ENCODE measurements at regions of chr6 and their contacts with region 1.

Region 1: DNA sequence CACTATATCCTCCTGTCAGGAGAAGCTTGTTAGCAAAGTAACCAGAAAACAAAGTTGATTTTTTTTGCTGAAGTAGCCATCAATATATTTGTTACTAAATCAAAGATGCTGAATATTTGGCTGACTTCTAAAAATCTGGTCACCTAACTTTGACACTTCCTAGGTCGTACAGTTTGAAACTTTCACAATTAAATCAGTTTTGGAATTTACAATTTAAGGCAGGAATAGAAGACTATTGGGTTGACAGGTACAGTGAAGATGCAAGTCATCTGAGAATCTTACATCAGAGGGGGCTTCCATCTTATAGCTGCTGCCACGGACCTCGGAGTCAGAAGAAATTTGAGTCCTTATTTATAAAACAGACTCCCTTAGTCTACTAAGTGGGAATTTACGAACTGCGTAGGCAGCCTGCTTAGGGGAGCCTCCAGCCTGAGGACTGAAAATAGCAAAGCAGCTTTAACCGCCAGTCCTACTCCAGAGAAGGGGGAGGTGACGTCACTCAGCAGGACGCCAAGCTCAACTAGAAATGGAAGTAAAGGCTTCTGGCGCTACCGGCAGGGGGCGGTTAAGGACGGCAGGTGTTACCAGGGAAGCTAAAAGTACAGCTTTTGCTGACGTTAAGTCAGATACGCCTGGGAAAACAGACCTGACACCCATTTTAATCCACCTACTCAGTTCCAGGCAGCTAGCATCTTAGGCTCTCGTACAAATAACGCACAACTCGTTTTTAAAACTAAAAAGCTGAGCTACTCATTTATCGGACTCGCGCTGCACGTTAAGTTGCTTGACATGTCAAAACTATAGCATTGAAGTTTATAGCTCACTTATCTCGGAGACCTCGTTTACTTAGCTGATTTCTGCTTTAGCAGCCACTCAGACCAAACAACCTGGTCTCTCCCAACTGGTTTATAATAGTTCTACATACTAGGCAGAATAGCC is 61.1 kb upstream of the HFE start:
- DNase-seq: peak; percentile 92
- H3K4me3 ChIP-seq: peak overlapping the region; percentile 41 to 60 (median 59)
- H3K27ac ChIP-seq: peak overlapping the region; percentile 89
- H3K4me1 ChIP-seq: peaks cover 30% of the 10 kb centered on the region
- H3K27me3 ChIP-seq: no peaks in the 10 kb centered on the region
- CTCF ChIP-seq: peak; percentile 91 to 95

Region 2: GRCh38 chr6:25968769-25969168 is 57.4 kb before region 1 on chr6:
- CTCF ChIA-PET with region 1: no interaction called
- dilution Hi-C with region 1: loop called (anchors 5 kb)
- in situ Hi-C with region 1: no loop called
- intact Hi-C with region 1: no loop called
- DNase-seq: no peak
- H3K4me3 ChIP-seq: no peak overlapping the region
- H3K27ac ChIP-seq: no peak overlapping the region
- H3K4me1 ChIP-seq: peaks cover 19% of the 10 kb centered on the region
- H3K27me3 ChIP-seq: no peaks in the 10 kb centered on the region
- CTCF ChIP-seq: no peak

Region 3: GRCh38 chr6:25981568-25982263 is 44.4 kb before region 1 on chr6:
- CTCF ChIA-PET with region 1: no interaction called
- dilution Hi-C with region 1: no loop called
- in situ Hi-C with region 1: no loop called
- intact Hi-C with region 1: no loop called
- DNase-seq: no peak
- H3K4me3 ChIP-seq: no peak overlapping the region
- H3K27ac ChIP-seq: no peak overlapping the region
- H3K4me1 ChIP-seq: no peaks in the 10 kb centered on the region
- H3K27me3 ChIP-seq: no peaks in the 10 kb centered on the region
- CTCF ChIP-seq: no peak

Region 4: DNA sequence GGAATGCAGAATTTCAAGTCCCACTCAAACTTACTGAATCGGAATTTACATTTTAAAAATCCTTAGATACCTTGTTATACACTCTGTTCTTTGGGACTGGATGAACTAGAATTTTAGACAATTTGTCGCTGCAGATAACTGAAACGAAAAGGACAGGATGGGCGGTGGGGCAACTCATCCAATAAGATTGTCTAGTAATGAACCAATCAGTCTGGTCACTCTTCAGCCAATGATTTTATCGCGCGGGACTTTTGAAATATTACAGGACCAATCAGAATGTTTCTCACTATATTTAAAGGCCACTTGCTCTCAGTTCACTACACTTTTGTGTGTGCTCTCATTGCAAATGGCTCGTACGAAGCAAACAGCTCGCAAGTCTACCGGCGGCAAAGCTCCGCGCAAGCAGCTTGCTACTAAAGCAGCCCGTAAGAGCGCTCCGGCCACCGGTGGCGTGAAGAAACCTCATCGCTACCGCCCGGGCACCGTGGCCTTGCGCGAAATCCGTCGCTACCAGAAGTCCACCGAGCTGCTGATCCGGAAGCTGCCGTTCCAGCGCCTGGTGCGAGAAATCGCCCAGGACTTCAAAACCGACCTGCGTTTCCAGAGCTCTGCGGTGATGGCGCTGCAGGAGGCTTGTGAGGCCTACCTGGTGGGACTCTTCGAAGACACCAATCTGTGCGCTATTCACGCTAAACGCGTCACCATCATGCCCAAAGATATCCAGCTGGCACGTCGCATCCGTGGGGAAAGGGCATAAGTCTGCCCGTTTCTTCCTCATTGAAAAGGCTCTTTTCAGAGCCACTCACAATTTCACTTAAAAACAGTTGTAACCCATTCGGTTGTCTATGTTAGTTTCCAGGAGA is 19.1 kb after region 1 on chr6:
- CTCF ChIA-PET with region 1: no interaction called
- dilution Hi-C with region 1: no loop called
- in situ Hi-C with region 1: no loop called
- intact Hi-C with region 1: loop called (anchors 1 kb)
- DNase-seq: peak; percentile 93
- H3K4me3 ChIP-seq: peak overlapping the region; percentile 37 to 64 (median 44)
- H3K27ac ChIP-seq: peak overlapping the region; percentile 79
- H3K4me1 ChIP-seq: peaks cover 27% of the 10 kb centered on the region
- H3K27me3 ChIP-seq: no peaks in the 10 kb centered on the region
- CTCF ChIP-seq: peak; percentile 22 to 36

Region 5: DNA sequence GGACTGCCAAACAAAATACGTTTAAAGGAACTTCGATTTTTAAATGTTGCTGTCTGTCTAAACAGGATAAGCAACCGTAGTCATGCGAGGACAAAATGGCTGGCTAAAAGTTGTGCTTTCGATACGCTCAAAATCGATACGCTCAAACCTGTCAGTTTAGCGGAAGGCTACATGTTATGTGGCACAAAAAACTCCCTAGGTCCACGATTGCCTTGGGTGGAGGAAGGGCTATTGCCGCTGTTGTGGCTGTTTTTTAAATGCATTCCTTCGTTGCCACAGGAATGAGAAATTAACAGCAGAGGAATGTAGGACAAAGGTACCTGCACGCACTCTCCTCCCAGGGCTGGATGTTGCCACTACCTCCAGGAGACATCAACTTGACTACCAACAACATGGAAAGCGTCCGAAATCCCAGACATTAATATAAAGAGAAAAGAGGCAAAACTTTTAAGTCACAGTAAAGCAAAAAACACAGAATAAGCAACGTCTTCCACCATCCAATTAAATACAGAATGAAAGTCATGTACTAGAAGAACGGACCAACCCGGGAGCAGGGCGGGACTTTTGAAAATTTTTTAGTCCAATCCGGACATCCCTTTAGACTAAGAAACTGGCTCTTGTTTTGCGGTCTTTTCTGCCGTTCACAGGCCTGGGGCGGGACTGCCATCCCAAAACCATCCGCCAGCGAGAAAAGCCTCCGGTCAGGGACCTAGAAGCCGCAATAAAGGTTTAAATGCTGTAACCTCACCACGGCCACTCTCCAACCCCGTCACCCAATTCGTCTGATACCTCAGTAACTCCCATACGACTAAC is 28.9 kb after region 1 on chr6:
- CTCF ChIA-PET with region 1: interaction called, 4 read pairs
- dilution Hi-C with region 1: no loop called
- in situ Hi-C with region 1: no loop called
- intact Hi-C with region 1: loop called (anchors 1 kb)
- DNase-seq: peak; percentile 92
- H3K4me3 ChIP-seq: peak overlapping the region; percentile 61 to 82 (median 62)
- H3K27ac ChIP-seq: peak overlapping the region; percentile 91
- H3K4me1 ChIP-seq: peaks cover 9% of the 10 kb centered on the region
- H3K27me3 ChIP-seq: no peaks in the 10 kb centered on the region
- CTCF ChIP-seq: peak in 1 of 2 donors; percentile 19

Region 6: GRCh38 chr6:26103770-26104456 is 77.8 kb after region 1 on chr6:
- CTCF ChIA-PET with region 1: no interaction called
- dilution Hi-C with region 1: no loop called
- in situ Hi-C with region 1: no loop called
- intact Hi-C with region 1: loop called (anchors 1 kb)
- DNase-seq: peak; percentile 95
- H3K4me3 ChIP-seq: peak overlapping the region; percentile 45 to 47 (median 47)
- H3K27ac ChIP-seq: peak overlapping the region; percentile 93
- H3K4me1 ChIP-seq: peaks cover 8% of the 10 kb centered on the region
- H3K27me3 ChIP-seq: no peaks in the 10 kb centered on the region
- CTCF ChIP-seq: peak; percentile 33 to 45

Region 7: GRCh38 chr6:26196846-26197648 is 170.9 kb after region 1 on chr6:
- CTCF ChIA-PET with region 1: no interaction called
- dilution Hi-C with region 1: no loop called
- in situ Hi-C with region 1: no loop called
- intact Hi-C with region 1: loop called (anchors 2 kb)
- DNase-seq: peak; percentile 89
- H3K4me3 ChIP-seq: peak overlapping the region; percentile 69 to 90 (median 87)
- H3K27ac ChIP-seq: peak overlapping the region; percentile 87
- H3K4me1 ChIP-seq: peaks cover 8% of the 10 kb centered on the region
- H3K27me3 ChIP-seq: no peaks in the 10 kb centered on the region
- CTCF ChIP-seq: no peak